GM12878 (cell line): ENCODE measurements at regions of chr9 and their contacts with region 1.

Region 1: GRCh38 chr9:76704593-76705204 is 59.5 kb upstream of the PCA3 start:
- DNase-seq: peak; percentile 20
- ATAC-seq: peak; percentile 52; the same call in 2 of the 3 replicates
- H3K4me3 ChIP-seq: no peak overlapping the region
- H3K27ac ChIP-seq: no peak overlapping the region
- H3K4me1 ChIP-seq: no peaks in the 10 kb centered on the region
- H3K27me3 ChIP-seq: peaks cover 4 to 5% of the 10 kb centered on the region in 2 experiments; a peak in 2 of 4 replicates
- CTCF ChIP-seq: peak; percentile 45 to 66 (median 56); a peak in 5 of 6 replicates
- EP300 ChIP-seq: no peak
- POLR2A ChIP-seq: no peak
- RAD21 ChIP-seq: peak; percentile 86

Region 2: DNA sequence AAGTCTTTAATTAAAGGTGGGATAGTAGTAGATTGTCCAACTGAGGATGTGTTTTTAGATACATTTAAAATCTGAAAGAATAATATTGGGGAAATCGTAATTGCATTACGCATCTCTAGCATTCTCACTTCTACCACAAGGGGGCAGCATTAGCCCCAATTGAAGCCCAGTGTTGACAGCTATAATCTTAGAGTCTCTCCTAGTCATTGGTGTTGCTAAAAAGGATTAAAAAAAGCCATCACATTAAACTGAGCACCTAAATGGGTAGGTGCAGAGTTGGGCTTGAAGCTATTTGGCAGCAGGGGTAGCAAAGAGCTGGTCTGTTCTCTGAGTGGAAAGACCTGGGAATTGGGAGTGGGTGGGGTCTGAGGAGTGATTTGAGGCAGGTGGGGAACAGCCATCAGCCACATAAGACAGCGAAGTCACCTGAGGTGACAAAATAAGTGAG is 1439.2 kb before region 1 on chr9:
- CTCF ChIA-PET with region 1: interaction called, 3 read pairs
- POLR2A ChIA-PET with region 1: no interaction called
- RAD21 ChIA-PET with region 1: no interaction called
- SMC1A ChIA-PET with region 1: no interaction called
- in situ Hi-C with region 1: no loop called
- intact Hi-C with region 1: loop called (anchors 10 kb)
- DNase-seq: no peak
- ATAC-seq: peak; percentile 87
- H3K4me3 ChIP-seq: no peak overlapping the region
- H3K27ac ChIP-seq: no peak overlapping the region
- H3K4me1 ChIP-seq: no peaks in the 10 kb centered on the region
- H3K27me3 ChIP-seq: no peaks in the 10 kb centered on the region; a peak in 1 of 4 replicates
- CTCF ChIP-seq: peak; percentile 75 to 85 (median 79)
- EP300 ChIP-seq: no peak
- POLR2A ChIP-seq: no peak
- RAD21 ChIP-seq: peak; percentile 79

Region 3: DNA sequence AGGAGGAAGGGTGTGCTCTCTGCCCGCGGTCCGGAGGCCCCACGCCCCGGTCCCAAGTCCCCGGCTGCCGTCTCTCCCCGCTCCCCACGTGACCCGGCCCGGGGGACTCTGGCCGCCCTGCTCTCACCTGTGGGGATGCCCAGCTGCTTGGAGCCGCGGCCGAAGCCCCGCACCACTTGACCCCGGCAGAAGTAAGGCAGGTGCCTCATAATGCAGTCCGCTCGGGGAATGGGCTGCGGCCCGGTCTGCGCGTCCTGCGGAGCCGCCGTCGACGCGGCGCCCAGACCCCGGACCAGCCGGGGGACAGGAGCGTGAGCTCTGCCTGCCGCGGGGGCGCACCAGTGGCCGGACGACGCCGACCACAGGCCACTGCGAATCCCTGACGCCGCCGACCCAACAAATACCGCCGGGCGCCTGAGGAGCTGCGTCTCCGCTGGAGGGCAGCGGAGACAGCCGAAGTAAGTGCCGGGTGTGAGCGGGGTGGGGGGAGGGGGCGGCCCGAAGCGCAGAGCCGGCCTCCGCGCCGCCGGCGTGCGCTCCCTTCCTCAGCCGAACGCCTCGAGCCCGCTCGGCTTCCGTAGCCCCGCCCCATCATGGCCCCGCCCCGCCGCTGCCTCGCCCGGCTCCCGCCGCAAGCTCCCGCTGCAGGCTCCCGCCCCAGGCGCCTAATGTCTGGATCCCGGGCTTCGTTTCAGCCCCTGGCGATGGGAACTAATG is 310.6 kb before region 1 on chr9 and contains the start of gene RFK:
- CTCF ChIA-PET with region 1: interaction called, 5 read pairs
- POLR2A ChIA-PET with region 1: no interaction called
- RAD21 ChIA-PET with region 1: interaction called, 11 read pairs
- SMC1A ChIA-PET with region 1: interaction called, 3 read pairs
- in situ Hi-C with region 1: no loop called
- intact Hi-C with region 1: no loop called
- DNase-seq: peak; percentile 48
- ATAC-seq: peak; percentile 89
- H3K4me3 ChIP-seq: peak within 1 kb of the TSS; percentile 94
- H3K27ac ChIP-seq: peak within 1 kb of the TSS; percentile 54
- H3K4me1 ChIP-seq: peaks cover 4% of the 10 kb centered on the region; the same call in 1 of the 2 replicates
- H3K27me3 ChIP-seq: no peaks in the 10 kb centered on the region
- CTCF ChIP-seq: peak; percentile 42 to 64 (median 46); a peak in 4 of 6 replicates
- EP300 ChIP-seq: no peak
- POLR2A ChIP-seq: peak; percentile 81
- RAD21 ChIP-seq: peak; percentile 62
- polyA plus RNA-seq, gene RFK: 4.4 to 7.9 TPM

Region 4: DNA sequence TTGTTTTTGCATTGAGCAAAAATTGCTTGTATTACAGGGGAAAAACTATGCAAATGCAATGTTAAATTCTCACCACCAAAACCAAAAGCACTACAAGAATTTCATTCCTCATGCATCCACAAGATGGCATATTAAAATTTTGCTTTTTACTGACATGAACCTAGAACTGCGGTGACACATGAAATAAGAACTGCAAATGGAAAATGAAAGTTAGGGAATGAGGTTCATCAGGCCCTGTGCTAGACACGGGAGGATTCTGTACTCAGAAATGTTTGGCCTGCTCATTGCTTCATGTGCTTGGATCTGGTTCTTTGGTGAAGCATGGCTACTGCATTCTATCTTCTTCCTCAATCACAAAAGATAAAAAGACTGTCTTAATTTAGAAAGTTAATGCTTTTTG is 301.3 kb before region 1 on chr9:
- CTCF ChIA-PET with region 1: interaction called, 9 read pairs
- POLR2A ChIA-PET with region 1: no interaction called
- RAD21 ChIA-PET with region 1: interaction called, 5 read pairs
- SMC1A ChIA-PET with region 1: no interaction called
- in situ Hi-C with region 1: no loop called
- intact Hi-C with region 1: loop called (anchors 5 kb)
- DNase-seq: peak; percentile 55
- ATAC-seq: peak; percentile 88
- H3K4me3 ChIP-seq: no peak overlapping the region; the same call in 1 of the 2 replicates
- H3K27ac ChIP-seq: no peak overlapping the region
- H3K4me1 ChIP-seq: peaks cover 10% of the 10 kb centered on the region
- H3K27me3 ChIP-seq: no peaks in the 10 kb centered on the region
- CTCF ChIP-seq: peak; percentile 33 to 63 (median 56); a peak in 5 of 6 replicates
- EP300 ChIP-seq: no peak
- POLR2A ChIP-seq: no peak
- RAD21 ChIP-seq: peak; percentile 74

Region 5: DNA sequence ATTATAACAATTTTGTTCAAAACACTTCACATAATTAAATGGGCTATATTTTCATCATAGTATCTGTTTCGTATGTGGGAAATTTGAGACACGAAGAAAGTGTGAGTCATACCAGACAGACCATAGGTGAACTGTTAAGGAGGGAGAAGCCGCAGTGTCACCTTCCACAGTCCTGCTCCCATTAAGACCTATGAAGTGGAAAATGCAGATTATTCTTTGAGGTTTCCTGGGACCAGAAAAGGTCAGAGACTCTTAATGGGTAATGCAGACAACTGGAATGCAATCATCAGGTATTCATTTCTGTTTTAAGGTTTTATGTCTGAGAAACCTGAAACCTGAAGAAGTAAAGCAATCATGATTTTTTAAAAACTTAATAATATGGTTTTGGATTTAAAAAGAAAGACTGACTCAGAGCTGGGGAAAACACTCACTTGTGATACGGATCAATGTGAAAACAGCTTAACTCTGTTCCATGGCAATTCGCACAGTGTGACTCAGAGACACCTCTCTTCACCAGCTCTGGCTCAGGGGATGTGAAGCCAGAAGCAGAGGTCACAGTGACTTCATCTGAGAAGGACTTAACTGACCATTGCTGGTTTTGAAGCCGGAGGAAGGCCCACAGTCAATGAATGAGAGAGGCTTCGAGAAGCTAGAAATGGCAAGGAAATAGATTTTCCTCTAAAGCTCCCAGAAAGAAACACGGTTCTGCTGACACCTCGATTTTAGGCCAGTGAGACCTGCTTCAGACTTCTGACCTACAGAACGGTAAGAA is 263.0 kb before region 1 on chr9:
- CTCF ChIA-PET with region 1: interaction called, 20 read pairs
- POLR2A ChIA-PET with region 1: no interaction called
- RAD21 ChIA-PET with region 1: interaction called, 4 read pairs
- SMC1A ChIA-PET with region 1: no interaction called
- in situ Hi-C with region 1: loop called (anchors 5 kb)
- intact Hi-C with region 1: no loop called
- DNase-seq: peak; percentile 72
- ATAC-seq: peak; percentile 78
- H3K4me3 ChIP-seq: peak overlapping the region; percentile 10; the same call in 1 of the 2 replicates
- H3K27ac ChIP-seq: peak overlapping the region; percentile 82
- H3K4me1 ChIP-seq: peaks cover 40% of the 10 kb centered on the region
- H3K27me3 ChIP-seq: no peaks in the 10 kb centered on the region
- CTCF ChIP-seq: no peak
- EP300 ChIP-seq: peak; percentile 71 to 80
- POLR2A ChIP-seq: no peak
- RAD21 ChIP-seq: no peak

Region 6: GRCh38 chr9:76451234-76451633 is 253.5 kb before region 1 on chr9:
- CTCF ChIA-PET with region 1: interaction called, 20 read pairs
- POLR2A ChIA-PET with region 1: no interaction called
- RAD21 ChIA-PET with region 1: interaction called, 4 read pairs
- SMC1A ChIA-PET with region 1: interaction called, 5 read pairs
- in situ Hi-C with region 1: loop called (anchors 5 kb)
- intact Hi-C with region 1: loop called (anchors 1 kb)
- DNase-seq: no peak
- ATAC-seq: no peak
- H3K4me3 ChIP-seq: no peak overlapping the region
- H3K27ac ChIP-seq: no peak overlapping the region
- H3K4me1 ChIP-seq: 0 out of 2 replicates have a peak, but pooled peaks cover 2% of the 10 kb centered on the region
- H3K27me3 ChIP-seq: no peaks in the 10 kb centered on the region
- CTCF ChIP-seq: no peak
- EP300 ChIP-seq: no peak
- POLR2A ChIP-seq: no peak
- RAD21 ChIP-seq: no peak

Region 7: DNA sequence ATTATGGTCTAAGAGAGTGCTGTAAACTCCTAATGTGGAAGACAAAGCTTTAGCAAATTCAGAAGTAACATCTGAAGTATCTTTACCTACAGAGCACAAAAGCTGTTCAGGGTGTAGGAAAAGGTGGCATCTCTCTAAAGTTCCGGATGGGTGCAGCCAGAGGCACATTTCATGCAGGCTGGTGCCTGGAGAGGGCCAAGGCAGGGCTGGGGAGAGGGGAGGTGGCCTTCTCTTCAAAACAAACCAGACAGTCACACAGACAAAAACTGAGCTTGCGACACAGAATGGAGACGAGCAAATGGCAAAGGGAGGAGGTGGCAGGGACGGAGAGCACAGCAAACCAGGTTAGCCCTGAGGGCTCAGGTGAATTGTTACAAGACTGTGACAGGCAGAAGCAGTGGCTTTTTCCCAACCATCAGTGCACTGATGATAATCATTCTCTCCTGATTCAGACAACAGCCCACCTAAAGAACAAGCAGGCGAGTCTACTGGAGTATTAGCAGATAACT is 61.9 kb before region 1 on chr9:
- CTCF ChIA-PET with region 1: no interaction called
- POLR2A ChIA-PET with region 1: no interaction called
- RAD21 ChIA-PET with region 1: no interaction called
- SMC1A ChIA-PET with region 1: no interaction called
- in situ Hi-C with region 1: no loop called
- intact Hi-C with region 1: no loop called
- DNase-seq: no peak
- ATAC-seq: no peak
- H3K4me3 ChIP-seq: no peak overlapping the region; the same call in 1 of the 2 replicates
- H3K27ac ChIP-seq: peak overlapping the region; percentile 77
- H3K4me1 ChIP-seq: peaks cover 19% of the 10 kb centered on the region
- H3K27me3 ChIP-seq: no peaks in the 10 kb centered on the region
- CTCF ChIP-seq: no peak
- EP300 ChIP-seq: no peak
- POLR2A ChIP-seq: no peak
- RAD21 ChIP-seq: no peak

Region 8: DNA sequence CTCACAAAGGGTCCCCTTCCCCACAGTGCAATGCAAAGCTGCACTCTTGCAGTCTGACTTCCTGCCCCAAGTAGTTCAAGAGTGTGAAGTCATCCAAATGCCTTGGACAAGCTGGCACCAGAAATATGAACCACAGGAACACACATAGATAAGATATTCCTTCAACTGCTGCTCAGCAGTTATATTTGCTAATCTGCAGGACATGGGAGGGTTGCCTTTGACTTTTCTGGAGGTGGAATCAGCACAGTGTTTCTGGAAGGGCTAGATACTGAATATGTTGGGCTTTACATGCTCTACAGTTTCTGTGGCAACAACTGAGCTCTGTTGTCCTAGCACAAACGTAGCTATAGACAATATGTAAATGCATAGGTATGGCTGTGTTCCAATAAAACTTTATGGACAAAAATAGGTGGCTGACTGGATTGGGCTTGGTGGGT is 37.2 kb before region 1 on chr9:
- CTCF ChIA-PET with region 1: interaction called, 9 read pairs
- POLR2A ChIA-PET with region 1: no interaction called
- RAD21 ChIA-PET with region 1: interaction called, 3 read pairs
- SMC1A ChIA-PET with region 1: no interaction called
- in situ Hi-C with region 1: no loop called
- intact Hi-C with region 1: loop called (anchors 2 kb)
- DNase-seq: no peak
- ATAC-seq: no peak
- H3K4me3 ChIP-seq: no peak overlapping the region
- H3K27ac ChIP-seq: no peak overlapping the region
- H3K4me1 ChIP-seq: no peaks in the 10 kb centered on the region; the same call in 1 of the 2 replicates
- H3K27me3 ChIP-seq: peaks cover 1 to 2% of the 10 kb centered on the region in 2 experiments; a peak in 1 of 4 replicates
- CTCF ChIP-seq: no peak
- EP300 ChIP-seq: no peak
- POLR2A ChIP-seq: no peak
- RAD21 ChIP-seq: no peak